ENCODE measurements at regions of chr4 and their contacts with region 1.

Region 1: DNA sequence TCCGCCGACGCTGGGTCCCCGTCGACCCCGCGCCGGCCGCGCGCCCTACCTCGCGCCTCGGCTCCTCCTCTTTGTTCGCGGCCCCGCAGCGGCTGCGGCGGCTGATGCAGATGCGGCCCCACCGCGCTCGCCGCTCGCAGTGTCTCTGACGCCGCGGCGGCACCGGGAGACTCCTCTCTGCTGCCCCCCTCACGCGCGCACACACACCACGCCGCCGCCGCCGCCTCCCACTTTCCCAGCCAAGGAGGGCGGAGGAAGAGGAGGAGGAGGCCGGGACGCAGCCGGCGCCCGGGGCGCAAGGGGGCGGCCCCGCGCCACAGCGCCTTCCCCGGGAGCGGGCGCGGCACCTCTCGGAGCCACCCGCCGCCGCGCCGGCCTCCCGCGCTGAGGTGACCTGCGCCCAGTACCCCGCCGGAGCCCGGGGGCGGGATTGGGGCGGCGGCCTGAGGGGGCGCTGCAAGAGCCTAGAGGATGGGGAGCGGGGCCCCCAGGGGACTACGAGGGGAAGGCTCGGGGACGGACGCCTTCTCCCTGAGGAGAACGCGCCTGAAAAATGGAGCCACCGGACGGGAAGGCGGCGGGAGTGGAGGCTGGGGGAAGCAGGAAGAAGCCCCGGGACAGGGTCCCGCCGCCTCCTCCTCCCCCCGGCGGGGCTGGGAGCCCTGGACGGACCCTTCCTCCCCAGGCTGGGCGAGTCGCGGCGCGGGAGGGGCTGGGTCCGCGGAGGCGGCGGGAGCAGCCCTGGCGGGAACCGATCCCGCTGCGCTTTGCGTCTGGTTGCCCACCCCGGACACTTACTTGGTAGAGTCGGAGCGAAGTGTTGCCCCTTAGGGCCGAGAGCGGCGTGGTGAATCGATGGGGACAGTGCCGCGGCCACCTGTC is at the start of gene SH3RF1:
- DNase-seq: peak; percentile 45 to 88 (median 76)
- H3K4me3 ChIP-seq: peak within 1 kb of the TSS; percentile 59 to 98 (median 90)
- H3K27ac ChIP-seq: peak within 1 kb of the TSS; percentile 71 to 99 (median 92)
- H3K27me3 ChIP-seq: no peaks in the 10 kb centered on the region
- CTCF ChIP-seq: peak in 46 of 56 donors; percentile 11 to 76 (median 45)
- total RNA-seq, gene SH3RF1: 18.2 to 46.9 (median 29.5) TPM

Region 2: DNA sequence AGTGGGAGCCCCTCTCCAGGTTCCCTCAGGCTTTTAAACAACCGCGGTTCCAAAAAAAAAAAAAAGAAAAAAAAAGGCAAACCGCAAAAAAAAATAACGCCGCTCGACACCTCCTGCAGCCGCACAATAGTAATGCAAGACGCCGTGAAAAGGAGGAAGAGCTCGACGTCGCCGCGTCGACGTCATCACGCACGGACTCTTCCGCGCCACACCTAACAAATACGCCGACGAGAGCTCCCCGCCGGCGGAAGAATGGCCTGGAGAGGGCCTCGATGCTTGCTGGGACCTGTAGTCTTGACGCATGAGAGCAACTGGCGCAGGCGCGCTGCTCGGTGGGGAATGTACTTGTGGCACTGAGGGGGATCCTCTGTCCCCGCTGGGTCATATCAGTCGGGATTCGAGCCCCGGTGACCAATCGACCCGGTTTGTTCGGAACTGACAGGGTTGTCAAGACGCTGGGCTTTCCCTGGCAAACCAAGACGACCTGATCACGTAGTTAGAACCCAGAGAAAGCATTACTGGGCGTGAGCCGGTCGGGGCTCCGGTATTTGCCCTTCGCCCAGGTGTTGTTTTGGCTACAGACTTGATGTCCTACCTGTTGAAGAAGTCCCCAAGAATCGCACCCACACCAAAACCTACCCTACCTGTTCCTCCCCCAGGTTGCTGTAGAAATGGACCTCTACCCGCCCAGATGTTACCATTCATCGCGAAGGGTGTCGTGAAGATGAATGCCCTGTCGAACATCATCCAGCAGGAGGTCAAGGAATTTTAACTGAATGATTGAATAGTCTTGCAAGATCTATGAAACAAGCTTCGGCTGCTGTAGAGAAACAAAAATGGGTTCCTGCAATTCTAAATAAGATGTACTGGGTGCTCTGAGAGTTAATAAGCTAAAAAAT is 260.7 kb before region 1 on chr4 and contains the start of gene CBR4:
- intact Hi-C with region 1: loop called in 1 of 2 experiments (anchors 5 kb)
- DNase-seq: peak; percentile 98 to 99 (median 99)
- H3K4me3 ChIP-seq: peak within 1 kb of the TSS; percentile 62 to 95 (median 83)
- H3K27ac ChIP-seq: peak within 1 kb of the TSS; percentile 46 to 98 (median 91)
- H3K27me3 ChIP-seq: no peaks in the 10 kb centered on the region
- CTCF ChIP-seq: peak in 41 of 56 donors; percentile 15 to 67 (median 40)
- total RNA-seq, gene CBR4: 23.5 to 42.3 (median 31.8) TPM

Region 3: GRCh38 chr4:169115897-169116254 is 155.2 kb before region 1 on chr4:
- intact Hi-C with region 1: loop called in 1 of 2 experiments (anchors 10 kb)
- DNase-seq: peak in 1 of 10 donors; percentile 31
- H3K4me3 ChIP-seq: peak overlapping the region in 15 of 59 donors; percentile 1 to 53 (median 18)
- H3K27ac ChIP-seq: peak overlapping the region in 57 of 59 donors; percentile 3 to 94 (median 80)
- H3K27me3 ChIP-seq: no peaks in the 10 kb centered on the region
- CTCF ChIP-seq: peak in 5 of 56 donors; percentile 5 to 15 (median 10)

Region 4: GRCh38 chr4:169345194-169345787 is 74.2 kb after region 1 on chr4:
- intact Hi-C with region 1: loop called in 1 of 2 experiments (anchors 5 kb)
- DNase-seq: peak in 8 of 10 donors; percentile 38 to 77 (median 54)
- H3K4me3 ChIP-seq: peak overlapping the region in 18 of 59 donors; percentile 1 to 48 (median 15)
- H3K27ac ChIP-seq: peak overlapping the region in 58 of 59 donors; percentile 33 to 98 (median 86)
- H3K27me3 ChIP-seq: no peaks in the 10 kb centered on the region
- CTCF ChIP-seq: peak in 3 of 56 donors; percentile 9 to 29 (median 12)

Measured in dorsolateral prefrontal cortex (tissue), 120 donors.